ENCODE measurements at regions of chr1 and their contacts with region 1.

Region 1: GRCh38 chr1:91819038-91819788 is 66.7 kb downstream of the TGFBR3 start:
- DNase-seq: no peak
- H3K4me3 Mint-ChIP-seq: no peak overlapping the region
- H3K27ac Mint-ChIP-seq: peak overlapping the region; percentile 85
- H3K4me1 Mint-ChIP-seq: peaks cover 32% of the 10 kb centered on the region
- H3K27me3 Mint-ChIP-seq: no peaks in the 10 kb centered on the region
- CTCF ChIP-seq: no peak

Region 2: GRCh38 chr1:91189096-91189495 is 630.1 kb before region 1 on chr1:
- CTCF ChIA-PET with region 1: no interaction called
- POLR2A ChIA-PET with region 1: no interaction called
- intact Hi-C with region 1: no loop called
- DNase-seq: no peak
- H3K4me3 Mint-ChIP-seq: no peak overlapping the region
- H3K27ac Mint-ChIP-seq: no peak overlapping the region
- H3K4me1 Mint-ChIP-seq: no peaks in the 10 kb centered on the region
- H3K27me3 Mint-ChIP-seq: peaks cover 33% of the 10 kb centered on the region
- CTCF ChIP-seq: no peak

Region 3: GRCh38 chr1:91611498-91611917 is 207.7 kb before region 1 on chr1:
- CTCF ChIA-PET with region 1: no interaction called
- POLR2A ChIA-PET with region 1: no interaction called
- intact Hi-C with region 1: no loop called
- DNase-seq: peak; percentile 18
- H3K4me3 Mint-ChIP-seq: no peak overlapping the region
- H3K27ac Mint-ChIP-seq: peak overlapping the region; percentile 74
- H3K4me1 Mint-ChIP-seq: peaks cover 45% of the 10 kb centered on the region
- H3K27me3 Mint-ChIP-seq: no peaks in the 10 kb centered on the region
- CTCF ChIP-seq: no peak

Region 4: DNA sequence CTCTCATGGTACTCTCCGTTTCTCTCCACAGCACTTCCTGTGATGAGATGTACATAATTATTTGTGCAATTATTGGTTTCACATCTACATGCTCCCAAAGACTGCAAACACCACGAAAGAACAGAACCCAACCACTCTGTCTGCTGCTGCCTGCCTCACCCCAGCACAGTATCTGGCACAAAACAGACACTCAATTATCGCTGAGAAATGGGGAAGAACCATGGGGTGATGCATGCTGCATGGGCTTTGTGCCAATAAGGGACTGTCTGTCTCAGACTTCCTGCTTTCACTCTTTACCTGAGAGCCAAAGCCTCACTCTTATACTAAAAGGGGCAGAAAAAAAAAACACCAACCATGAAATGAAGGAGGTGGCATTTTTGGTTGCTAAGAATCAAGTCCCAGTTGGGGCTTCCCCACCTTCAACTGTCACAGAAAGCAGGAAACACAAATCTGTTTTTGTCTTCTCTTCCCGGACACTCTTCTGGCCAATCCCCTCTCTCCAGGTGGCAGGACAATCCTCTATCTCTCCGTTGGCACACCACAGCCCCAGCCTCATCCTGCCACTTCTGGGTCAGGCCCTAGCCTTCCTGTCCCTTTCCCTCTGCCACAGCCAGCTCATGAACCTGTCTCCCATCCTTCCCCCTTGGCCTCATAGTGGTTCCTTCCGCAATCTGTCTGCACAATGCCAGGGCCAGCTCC is 15.2 kb before region 1 on chr1:
- CTCF ChIA-PET with region 1: interaction called, 8 read pairs
- POLR2A ChIA-PET with region 1: interaction called, 68 read pairs
- intact Hi-C with region 1: no loop called
- DNase-seq: peak; percentile 78
- H3K4me3 Mint-ChIP-seq: peak overlapping the region; percentile 54
- H3K27ac Mint-ChIP-seq: peak overlapping the region; percentile 88
- H3K4me1 Mint-ChIP-seq: peaks cover 73% of the 10 kb centered on the region
- H3K27me3 Mint-ChIP-seq: no peaks in the 10 kb centered on the region
- CTCF ChIP-seq: no peak

Region 5: GRCh38 chr1:91958964-91959363 is 139.8 kb after region 1 on chr1:
- CTCF ChIA-PET with region 1: no interaction called
- POLR2A ChIA-PET with region 1: no interaction called
- intact Hi-C with region 1: no loop called
- DNase-seq: no peak
- H3K4me3 Mint-ChIP-seq: no peak overlapping the region
- H3K27ac Mint-ChIP-seq: no peak overlapping the region
- H3K4me1 Mint-ChIP-seq: no peaks in the 10 kb centered on the region
- H3K27me3 Mint-ChIP-seq: no peaks in the 10 kb centered on the region
- CTCF ChIP-seq: no peak

Region 6: DNA sequence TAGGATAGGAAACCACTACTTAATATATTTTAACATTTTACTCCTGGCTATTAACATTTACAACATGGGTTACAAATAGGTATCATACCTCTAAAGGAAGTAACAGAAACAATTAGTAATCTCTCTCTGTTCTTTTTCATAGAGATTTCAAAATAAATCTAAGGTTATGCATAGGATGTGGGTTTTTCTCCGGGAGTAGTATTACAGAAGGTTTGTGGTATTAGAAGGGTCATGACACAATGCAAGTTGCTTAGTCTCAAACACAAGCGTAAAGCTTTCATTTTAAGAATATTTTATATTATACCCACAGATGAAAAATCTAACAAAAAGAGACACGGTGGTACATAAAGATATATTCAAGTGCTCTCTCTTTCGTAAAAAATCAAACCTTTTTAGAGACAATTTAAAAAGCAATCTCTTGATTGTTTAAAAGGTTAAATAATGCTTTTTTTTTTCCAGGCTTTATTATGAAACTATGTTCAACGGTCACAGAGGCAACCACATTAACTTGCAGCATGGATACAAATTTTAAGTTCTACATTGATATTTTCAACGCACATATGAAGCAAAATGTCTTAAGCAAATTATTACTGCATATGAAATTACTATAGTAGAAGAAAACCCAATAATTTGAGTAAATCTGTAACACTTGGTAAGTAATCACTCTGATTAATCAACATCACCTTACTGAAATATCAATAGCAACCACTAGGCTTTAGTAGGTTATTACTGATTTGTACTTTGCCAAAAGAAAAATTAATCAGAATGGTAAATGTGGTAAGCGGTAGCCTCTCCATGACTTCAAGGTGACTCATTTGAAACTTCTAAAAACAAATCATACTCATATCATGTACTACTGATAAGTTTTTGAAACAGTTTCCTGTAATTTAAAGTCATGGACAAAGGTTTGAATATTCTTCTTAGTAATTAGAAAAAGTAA is 764.9 kb after region 1 on chr1:
- CTCF ChIA-PET with region 1: no interaction called
- POLR2A ChIA-PET with region 1: no interaction called
- intact Hi-C with region 1: no loop called
- DNase-seq: peak; percentile 70
- H3K4me3 Mint-ChIP-seq: peak overlapping the region; percentile 21
- H3K27ac Mint-ChIP-seq: peak overlapping the region; percentile 27
- H3K4me1 Mint-ChIP-seq: peaks cover 21% of the 10 kb centered on the region
- H3K27me3 Mint-ChIP-seq: no peaks in the 10 kb centered on the region
- CTCF ChIP-seq: no peak